ENCODE measurements at regions of chr14 and their contacts with region 1.

Region 1: DNA sequence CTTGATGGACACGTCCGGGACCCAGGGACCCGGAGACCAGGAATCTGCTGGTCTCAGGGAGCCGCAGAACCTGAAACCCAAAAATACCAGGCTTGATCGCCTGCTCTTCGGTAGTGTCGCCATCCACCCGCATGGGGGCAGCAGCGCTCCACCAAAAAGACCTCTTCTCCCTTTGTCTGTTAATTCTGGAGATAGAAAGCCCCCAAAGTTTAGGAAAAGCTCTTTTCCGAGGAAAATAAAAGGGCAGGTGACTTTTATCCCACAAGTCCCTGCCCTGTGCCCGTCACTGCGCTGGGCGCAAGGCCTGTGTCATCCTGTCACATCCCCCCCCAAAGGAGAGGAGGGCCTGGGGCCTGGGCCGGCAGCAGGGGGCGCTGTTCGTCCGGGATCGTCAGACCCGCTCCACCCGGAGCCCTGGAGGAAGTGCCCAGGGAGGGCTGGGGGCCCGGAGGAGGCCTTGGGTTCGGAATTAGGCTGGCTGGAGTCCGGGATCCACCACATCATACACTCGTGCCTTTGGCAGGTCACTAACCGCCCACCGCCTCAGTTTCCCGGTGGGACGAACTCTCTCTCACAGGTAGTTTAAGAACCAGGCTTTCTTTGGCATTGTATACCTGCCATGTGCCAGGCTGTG is 31.9 kb downstream of the DAD1 start:
- DNase-seq: peak; percentile 92 to 98
- ATAC-seq: peak; percentile 92
- H3K4me3 ChIP-seq: no peak overlapping the region
- H3K27ac ChIP-seq: no peak overlapping the region
- H3K4me1 ChIP-seq: no peaks in the 10 kb centered on the region
- H3K27me3 ChIP-seq: no peaks in the 10 kb centered on the region

Region 2: GRCh38 chr14:22386924-22387775 is 170.0 kb before region 1 on chr14:
- intact Hi-C with region 1: loop called (anchors 5 kb)
- DNase-seq: peak in 1 of 2 donors; percentile 56
- ATAC-seq: peak; percentile 79
- H3K4me3 ChIP-seq: no peak overlapping the region
- H3K27ac ChIP-seq: no peak overlapping the region
- H3K4me1 ChIP-seq: no peaks in the 10 kb centered on the region
- H3K27me3 ChIP-seq: no peaks in the 10 kb centered on the region

Region 3: DNA sequence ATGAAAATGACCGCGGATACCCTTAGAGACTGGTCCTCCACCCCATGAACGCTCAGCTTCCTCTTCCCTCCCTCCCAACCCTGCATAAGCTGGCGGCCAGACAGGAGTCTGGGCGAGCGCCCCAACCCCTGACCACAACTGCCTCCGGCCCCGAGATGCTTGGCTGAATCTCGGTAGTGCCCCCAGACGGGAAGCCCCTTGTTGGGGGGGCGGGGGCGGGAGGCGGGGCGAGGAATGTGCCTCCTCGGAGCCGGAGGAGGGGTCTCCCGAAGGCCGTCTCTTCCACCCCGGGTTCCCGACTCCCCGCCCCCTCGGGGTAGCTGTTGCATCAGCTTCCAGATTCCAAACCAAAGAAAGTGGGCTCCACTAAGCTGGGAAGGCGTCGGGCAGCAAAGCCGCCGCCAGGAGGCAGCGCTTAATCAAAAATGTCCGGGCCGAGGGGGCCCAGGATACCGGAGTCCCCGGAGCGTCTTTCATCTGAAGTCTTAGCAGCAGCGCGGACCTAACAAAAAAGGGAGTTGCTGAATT is 265.5 kb after region 1 on chr14:
- intact Hi-C with region 1: loop called in 1 of 2 experiments (anchors 10 kb)
- DNase-seq: peak; percentile 92 to 94
- ATAC-seq: peak; percentile 89
- H3K4me3 ChIP-seq: peak overlapping the region; percentile 33 to 66
- H3K27ac ChIP-seq: peak overlapping the region in 1 of 2 donors; percentile 67
- H3K4me1 ChIP-seq: peaks cover 0 to 3% of the 10 kb centered on the region in 2 donors
- H3K27me3 ChIP-seq: no peaks in the 10 kb centered on the region

Region 4: DNA sequence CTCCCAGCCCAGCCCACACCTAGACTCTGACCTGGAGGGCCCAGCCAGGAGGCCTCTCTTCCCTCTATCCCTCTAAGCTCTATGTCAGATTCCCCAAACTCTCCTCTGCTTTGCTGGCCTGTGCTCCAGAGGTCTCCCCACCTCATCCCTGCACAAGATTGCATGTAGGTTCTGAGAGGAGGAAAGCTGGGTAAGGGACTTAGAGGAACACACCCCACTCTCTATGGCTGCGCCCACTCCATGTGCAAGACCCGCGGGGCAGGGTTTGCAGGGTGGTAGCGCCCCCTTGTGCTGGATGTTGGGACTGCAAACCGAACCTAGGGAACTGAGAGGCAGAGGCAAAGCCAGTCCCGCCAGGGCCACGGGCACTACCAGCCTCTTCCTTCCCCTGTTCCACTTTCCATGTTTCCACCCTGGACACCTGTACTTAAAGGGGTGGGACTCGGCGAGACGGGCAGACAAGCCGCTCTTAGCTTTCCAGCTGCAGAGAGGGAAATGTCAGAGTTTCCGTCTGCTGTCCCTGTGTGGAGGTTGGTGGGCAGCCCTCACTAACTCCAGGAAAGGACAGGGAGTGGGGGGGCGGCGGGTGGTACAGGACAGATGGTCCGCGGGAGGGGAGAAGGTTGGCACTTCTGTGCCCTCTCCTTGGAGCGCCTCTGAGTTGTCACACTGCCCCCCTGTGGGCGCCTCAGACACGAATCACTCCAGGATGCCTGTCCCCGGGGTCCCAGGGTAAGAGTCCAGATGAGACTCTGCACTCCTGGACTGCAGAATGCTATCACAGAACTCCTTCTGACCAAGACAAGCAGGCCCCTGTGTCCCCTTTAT is 296.0 kb after region 1 on chr14:
- intact Hi-C with region 1: loop called (anchors 2 to 5 kb)
- DNase-seq: peak; percentile 92 to 98
- ATAC-seq: peak; percentile 76
- H3K4me3 ChIP-seq: no peak overlapping the region
- H3K27ac ChIP-seq: no peak overlapping the region
- H3K4me1 ChIP-seq: no peaks in the 10 kb centered on the region
- H3K27me3 ChIP-seq: no peaks in the 10 kb centered on the region

Region 5: DNA sequence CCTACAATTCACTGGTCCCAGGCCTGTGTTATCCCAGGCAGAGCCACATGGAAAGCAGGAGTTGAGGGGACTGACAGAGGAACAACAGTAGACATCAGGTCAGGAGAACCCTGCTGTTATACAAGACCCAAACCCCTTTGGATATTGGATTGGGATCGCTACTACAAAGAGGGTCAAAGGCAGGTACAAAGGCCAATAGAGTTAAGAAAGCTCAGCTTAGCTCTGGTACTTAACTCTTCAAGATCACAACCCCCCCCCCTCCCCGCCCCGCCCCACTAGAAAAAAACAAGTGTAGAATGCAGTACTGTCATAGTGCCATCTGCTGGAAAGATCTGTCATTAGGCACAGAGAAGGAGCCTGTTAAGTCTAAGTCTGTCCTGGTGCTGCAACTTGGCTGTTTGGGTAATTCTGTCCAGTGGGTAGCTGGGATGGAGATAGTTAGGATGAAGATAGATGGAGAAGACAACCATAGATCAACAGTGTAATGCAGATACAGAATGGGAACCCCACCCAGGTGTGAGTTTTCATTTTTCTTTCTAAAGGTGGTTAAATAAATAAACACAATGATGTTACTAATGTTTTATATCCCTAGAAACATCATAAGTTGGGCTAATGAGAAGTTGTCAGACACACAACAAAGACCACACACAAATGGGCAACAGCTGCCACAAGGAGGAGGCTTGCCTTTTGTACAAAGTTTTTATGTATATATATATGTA is 343.1 kb after region 1 on chr14:
- intact Hi-C with region 1: loop called in 1 of 2 experiments (anchors 5 kb)
- DNase-seq: peak in 1 of 2 donors; percentile 31
- ATAC-seq: peak; percentile 75
- H3K4me3 ChIP-seq: no peak overlapping the region
- H3K27ac ChIP-seq: peak overlapping the region in 1 of 2 donors; percentile 34
- H3K4me1 ChIP-seq: no peaks in the 10 kb centered on the region
- H3K27me3 ChIP-seq: no peaks in the 10 kb centered on the region

Region 6: DNA sequence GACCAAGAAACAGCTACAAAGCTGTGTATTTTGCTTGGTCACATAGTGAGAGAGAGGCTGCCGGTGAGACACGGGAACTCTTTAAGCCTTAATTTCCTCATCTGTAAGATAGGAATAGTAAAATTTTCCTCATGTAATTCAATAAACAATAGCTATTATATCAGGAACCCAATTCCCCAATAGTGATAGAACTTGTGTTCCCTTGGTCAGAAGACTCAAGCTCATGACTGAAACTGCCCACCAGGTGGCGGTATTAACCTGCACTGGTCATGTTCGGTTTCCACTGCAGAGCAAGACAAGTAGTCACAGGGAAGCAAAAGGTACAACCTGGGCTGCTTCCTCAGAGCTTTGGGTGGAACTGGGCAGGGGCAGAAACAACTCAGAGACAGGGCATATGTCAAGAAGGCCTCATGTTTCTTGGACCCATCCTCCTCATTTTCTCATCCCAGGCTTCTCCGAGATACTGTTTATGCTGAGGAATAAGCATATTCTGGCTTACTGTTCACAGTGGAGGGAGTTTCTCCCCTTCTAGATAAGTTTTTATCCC is 429.5 kb after region 1 on chr14:
- intact Hi-C with region 1: loop called (anchors 5 to 10 kb)
- DNase-seq: peak; percentile 90 to 93
- ATAC-seq: peak; percentile 70
- H3K4me3 ChIP-seq: no peak overlapping the region
- H3K27ac ChIP-seq: no peak overlapping the region
- H3K4me1 ChIP-seq: no peaks in the 10 kb centered on the region
- H3K27me3 ChIP-seq: no peaks in the 10 kb centered on the region

Region 7: GRCh38 chr14:23057757-23058653 is 500.9 kb after region 1 on chr14:
- intact Hi-C with region 1: loop called in 1 of 2 experiments (anchors 10 kb)
- DNase-seq: peak; percentile 91 to 96
- ATAC-seq: peak; percentile 87
- H3K4me3 ChIP-seq: peak overlapping the region; percentile 28 to 49
- H3K27ac ChIP-seq: peak overlapping the region in 1 of 2 donors; percentile 0
- H3K4me1 ChIP-seq: peaks cover 0 to 3% of the 10 kb centered on the region in 2 donors
- H3K27me3 ChIP-seq: no peaks in the 10 kb centered on the region